ENCODE measurements at regions of chr20 and their contacts with region 1.

Region 1: GRCh38 chr20:34363062-34363464 is at the start of gene ITCH:
- DNase-seq: peak; percentile 89 to 95
- H3K4me3 ChIP-seq: peak within 1 kb of the TSS; percentile 91
- H3K27ac ChIP-seq: peak within 1 kb of the TSS; percentile 94
- H3K4me1 ChIP-seq: peaks cover 55% of the 10 kb centered on the region
- H3K27me3 ChIP-seq: no peaks in the 10 kb centered on the region
- CTCF ChIP-seq: no peak
- total RNA-seq, gene ITCH: 91.6 and 144 TPM in 2 replicates

Region 2: DNA sequence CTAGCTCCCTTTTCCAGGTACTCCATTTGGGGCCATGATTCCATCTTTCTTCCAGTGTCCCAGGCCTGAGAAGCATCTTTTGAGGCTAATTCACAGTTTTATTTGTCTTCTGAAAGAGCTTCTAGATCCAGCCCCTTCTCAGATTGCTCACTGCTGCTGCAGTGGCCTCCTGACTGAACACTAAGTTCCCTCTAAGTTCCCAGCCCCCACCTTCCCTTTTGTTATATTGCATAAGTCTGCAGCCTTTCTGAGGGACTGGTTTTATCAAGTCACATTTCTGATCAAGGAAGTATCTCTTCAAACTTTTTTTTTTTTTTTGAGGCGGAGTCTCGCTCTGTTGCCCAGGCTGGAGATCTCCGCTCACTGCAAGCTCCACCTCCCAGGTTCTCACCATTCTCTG is 1532.6 kb before region 1 on chr20:
- CTCF ChIA-PET with region 1: no interaction called
- POLR2A ChIA-PET with region 1: interaction called, 13 read pairs
- intact Hi-C with region 1: no loop called
- DNase-seq: no peak
- H3K4me3 ChIP-seq: no peak overlapping the region
- H3K27ac ChIP-seq: no peak overlapping the region
- H3K4me1 ChIP-seq: no peaks in the 10 kb centered on the region
- H3K27me3 ChIP-seq: no peaks in the 10 kb centered on the region
- CTCF ChIP-seq: no peak

Region 3: DNA sequence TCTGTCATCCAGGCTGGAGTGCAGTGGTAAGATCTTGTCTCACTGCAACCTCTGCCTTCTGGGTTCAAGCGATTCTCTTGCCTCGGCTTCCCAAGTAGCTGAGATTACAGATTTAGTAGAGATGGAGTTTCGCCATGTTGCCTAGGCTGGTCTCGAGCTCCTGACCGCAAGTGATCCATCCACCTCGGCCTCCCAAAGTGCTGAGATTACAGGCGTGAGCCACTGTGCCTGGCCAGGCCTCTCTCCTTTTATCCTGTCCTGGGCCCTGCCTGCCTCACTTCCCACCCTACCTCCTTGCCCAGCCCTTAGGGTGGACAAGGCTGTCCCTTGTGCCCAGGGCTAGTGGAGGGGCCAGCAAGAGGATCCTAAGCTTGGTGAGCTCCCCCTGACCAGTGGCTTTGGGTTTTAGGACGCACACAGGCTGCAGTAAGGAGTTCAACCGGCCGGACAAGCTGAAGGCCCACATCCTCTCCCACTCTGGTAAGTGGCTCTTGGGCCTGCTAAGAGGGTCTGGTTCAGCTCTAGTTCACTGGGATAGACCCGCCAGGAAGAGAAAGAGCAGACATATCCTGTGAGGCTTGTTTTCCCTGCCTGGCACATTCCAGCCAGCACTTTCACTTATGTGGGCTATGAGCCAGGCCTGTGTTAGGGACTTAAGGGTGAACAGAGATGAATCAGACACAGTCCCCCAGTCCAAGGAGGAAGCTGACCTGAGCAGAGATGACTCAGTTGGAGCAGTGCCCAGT is 573.8 kb before region 1 on chr20:
- CTCF ChIA-PET with region 1: no interaction called
- POLR2A ChIA-PET with region 1: no interaction called
- intact Hi-C with region 1: no loop called
- DNase-seq: peak; percentile 98 to 100
- H3K4me3 ChIP-seq: peak overlapping the region; percentile 24; the same call in 1 of the 2 replicates
- H3K27ac ChIP-seq: peak overlapping the region; percentile 98
- H3K4me1 ChIP-seq: peaks cover 59% of the 10 kb centered on the region
- H3K27me3 ChIP-seq: no peaks in the 10 kb centered on the region
- CTCF ChIP-seq: no peak

Region 4: DNA sequence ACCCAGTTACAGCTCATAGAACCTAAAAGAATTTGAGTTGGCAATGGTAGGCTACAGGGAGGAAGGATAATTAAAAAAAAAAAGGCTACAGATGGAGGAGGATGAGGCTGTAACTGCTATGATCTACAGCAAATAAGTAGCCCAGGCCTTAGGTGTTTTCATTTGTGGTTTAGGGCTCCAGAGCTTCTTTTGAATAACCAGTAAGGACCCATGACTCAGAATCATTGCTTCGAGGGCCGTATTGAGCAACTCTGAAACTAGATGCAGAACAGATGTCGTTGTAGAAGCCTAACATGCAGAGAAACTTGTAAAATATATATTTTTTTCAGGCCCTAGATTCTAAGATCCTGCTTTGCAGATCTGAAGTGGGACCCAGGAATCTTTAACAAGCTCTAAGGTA is 140.9 kb before region 1 on chr20:
- CTCF ChIA-PET with region 1: no interaction called
- POLR2A ChIA-PET with region 1: interaction called, 12 read pairs
- intact Hi-C with region 1: no loop called
- DNase-seq: no peak
- H3K4me3 ChIP-seq: no peak overlapping the region
- H3K27ac ChIP-seq: no peak overlapping the region
- H3K4me1 ChIP-seq: no peaks in the 10 kb centered on the region
- H3K27me3 ChIP-seq: 0 out of 2 replicates have a peak, but pooled peaks cover 3% of the 10 kb centered on the region
- CTCF ChIP-seq: no peak

Region 5: DNA sequence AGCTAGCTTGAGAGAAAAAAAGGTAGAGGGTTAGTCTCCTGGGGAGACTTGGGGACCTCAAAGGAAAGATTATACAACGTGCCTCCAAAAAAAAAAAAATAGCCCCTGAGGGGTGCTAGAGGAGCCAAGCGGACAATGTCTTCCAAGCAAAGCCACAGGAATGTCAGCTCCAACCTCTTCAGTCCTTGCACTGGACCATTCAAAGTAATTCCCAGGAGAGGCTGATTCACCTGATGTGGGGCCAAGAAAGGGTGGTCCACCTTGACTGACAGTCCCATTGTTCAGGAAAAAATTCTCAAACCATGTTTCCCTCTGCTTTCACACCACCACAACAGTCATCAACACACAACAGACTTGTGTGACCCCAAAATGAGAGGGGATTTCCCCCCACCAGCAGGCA is 91.1 kb before region 1 on chr20:
- CTCF ChIA-PET with region 1: no interaction called
- POLR2A ChIA-PET with region 1: no interaction called
- intact Hi-C with region 1: no loop called
- DNase-seq: peak in 1 of 2 experiments; percentile 44
- H3K4me3 ChIP-seq: no peak overlapping the region
- H3K27ac ChIP-seq: no peak overlapping the region
- H3K4me1 ChIP-seq: no peaks in the 10 kb centered on the region
- H3K27me3 ChIP-seq: no peaks in the 10 kb centered on the region
- CTCF ChIP-seq: no peak

Region 6: GRCh38 chr20:34285450-34285849 is 77.6 kb before region 1 on chr20:
- CTCF ChIA-PET with region 1: no interaction called
- POLR2A ChIA-PET with region 1: no interaction called
- intact Hi-C with region 1: no loop called
- DNase-seq: no peak
- H3K4me3 ChIP-seq: no peak overlapping the region
- H3K27ac ChIP-seq: no peak overlapping the region
- H3K4me1 ChIP-seq: no peaks in the 10 kb centered on the region
- H3K27me3 ChIP-seq: no peaks in the 10 kb centered on the region
- CTCF ChIP-seq: no peak

Region 7: DNA sequence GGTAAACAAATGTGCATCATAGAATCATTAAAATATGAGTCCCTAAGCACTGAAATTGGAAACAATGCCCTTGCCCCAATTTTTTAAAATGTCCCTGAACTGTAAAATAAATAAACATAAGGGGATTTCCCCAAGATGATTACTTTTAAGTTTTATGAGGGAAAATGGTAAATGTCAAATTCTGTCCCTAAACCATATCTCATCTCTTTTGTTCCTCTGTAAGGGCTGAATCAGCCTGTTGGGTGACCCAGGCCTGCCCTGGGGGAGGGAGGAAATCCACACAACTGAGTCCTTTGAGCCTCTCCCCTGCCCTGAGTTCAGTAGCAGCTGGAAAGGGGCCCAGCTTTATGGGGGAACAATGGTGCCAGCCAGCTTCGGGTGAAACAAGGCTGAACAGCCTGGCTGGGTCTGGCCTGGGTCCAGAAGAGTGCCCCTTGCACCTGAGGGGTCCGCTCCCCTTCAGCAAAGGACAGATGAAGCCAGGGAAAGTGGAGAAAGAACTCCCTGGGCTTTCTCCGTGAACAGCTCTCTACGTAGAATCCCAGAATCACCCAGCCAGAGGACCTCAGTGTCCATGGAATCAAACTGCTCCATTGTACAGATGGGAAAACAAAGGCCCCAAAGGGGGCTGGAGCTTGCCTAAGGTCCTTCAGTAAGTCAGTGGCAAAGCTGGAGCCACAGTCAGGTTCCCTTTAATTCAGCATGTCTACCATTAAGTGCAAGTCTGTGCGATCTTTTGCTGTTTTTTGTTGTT is 28.2 kb before region 1 on chr20:
- CTCF ChIA-PET with region 1: interaction called, 17 read pairs
- POLR2A ChIA-PET with region 1: interaction called, 6 read pairs
- intact Hi-C with region 1: no loop called
- DNase-seq: peak; percentile 43 to 60
- H3K4me3 ChIP-seq: no peak overlapping the region
- H3K27ac ChIP-seq: peak overlapping the region; percentile 92
- H3K4me1 ChIP-seq: peaks cover 40% of the 10 kb centered on the region
- H3K27me3 ChIP-seq: no peaks in the 10 kb centered on the region
- CTCF ChIP-seq: no peak

Region 8: DNA sequence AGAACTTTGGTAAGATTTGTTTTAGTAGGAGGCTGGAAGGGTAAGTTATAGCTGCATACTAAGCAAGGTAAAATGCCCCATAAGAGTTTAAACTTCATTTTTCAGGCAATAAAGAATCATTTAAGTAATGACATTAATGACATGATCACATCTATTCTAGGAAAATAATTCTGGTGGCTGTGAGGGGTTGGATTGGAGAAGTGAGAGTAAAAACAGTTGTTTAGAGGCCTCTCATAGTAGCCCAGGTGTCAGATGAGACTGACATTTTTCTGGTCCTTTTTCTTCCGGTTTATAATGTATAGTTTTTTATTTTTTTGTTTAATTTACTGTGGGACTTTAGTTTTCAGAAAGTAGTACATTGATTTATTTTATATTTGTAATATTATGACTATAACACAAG is 40.8 kb after region 1 on chr20:
- CTCF ChIA-PET with region 1: no interaction called
- POLR2A ChIA-PET with region 1: interaction called, 10 read pairs
- intact Hi-C with region 1: loop called (anchors 5 kb)
- DNase-seq: no peak
- H3K4me3 ChIP-seq: no peak overlapping the region
- H3K27ac ChIP-seq: peak overlapping the region; percentile 20
- H3K4me1 ChIP-seq: peaks cover 38% of the 10 kb centered on the region
- H3K27me3 ChIP-seq: no peaks in the 10 kb centered on the region
- CTCF ChIP-seq: no peak

Region 9: GRCh38 chr20:34427331-34427730 is 64.3 kb after region 1 on chr20:
- CTCF ChIA-PET with region 1: no interaction called
- POLR2A ChIA-PET with region 1: interaction called, 12 read pairs
- intact Hi-C with region 1: no loop called
- DNase-seq: no peak
- H3K4me3 ChIP-seq: no peak overlapping the region
- H3K27ac ChIP-seq: no peak overlapping the region; the same call in 1 of the 2 replicates
- H3K4me1 ChIP-seq: no peaks in the 10 kb centered on the region
- H3K27me3 ChIP-seq: no peaks in the 10 kb centered on the region
- CTCF ChIP-seq: no peak

Measured in PC-9 (cell line).